Endothelial cell of umbilical vein (primary cell): ENCODE measurements at regions of chr9 and their contacts with region 1.

Region 1: GRCh38 chr9:87497604-87498045 is at the start of gene DAPK1:
- DNase-seq: peak; percentile 84
- H3K4me3 ChIP-seq: peak within 1 kb of the TSS; percentile 72 to 93 (median 77)
- H3K27ac ChIP-seq: peak within 1 kb of the TSS; percentile 78
- H3K4me1 ChIP-seq: peaks cover 35% of the 10 kb centered on the region
- H3K27me3 ChIP-seq: no peaks in the 10 kb centered on the region
- CTCF ChIP-seq: peak; percentile 9 to 42
- POLR2A ChIP-seq: peak; percentile 71
- total RNA-seq, gene DAPK1: 93.4 and 119 TPM in 2 replicates

Region 2: DNA sequence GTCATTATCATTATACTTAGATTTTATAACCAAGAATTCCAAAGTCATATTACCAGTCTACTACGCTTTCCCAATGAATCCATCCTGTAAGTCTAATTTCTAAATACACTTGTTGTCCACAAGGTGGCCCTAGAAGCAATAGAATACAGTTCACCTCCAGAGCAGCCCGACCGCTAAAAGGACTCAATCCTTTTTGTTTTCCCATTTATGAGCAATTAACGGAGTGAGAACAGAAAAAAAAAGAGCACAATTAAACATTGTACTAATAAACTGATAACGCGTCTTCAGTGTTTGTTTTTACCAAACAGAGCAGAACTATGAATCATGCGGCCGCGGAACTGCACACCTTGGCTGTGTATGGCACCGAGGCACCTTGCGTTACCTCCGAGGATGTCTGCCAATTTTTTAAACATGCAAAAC is 160.7 kb before region 1 on chr9:
- CTCF ChIA-PET with region 1: interaction called, 11 read pairs
- POLR2A ChIA-PET with region 1: no interaction called
- dilution Hi-C with region 1: no loop called
- intact Hi-C with region 1: loop called (anchors 1 kb)
- DNase-seq: peak; percentile 77
- H3K4me3 ChIP-seq: peak overlapping the region in 2 of 3 experiments; percentile 25 to 48
- H3K27ac ChIP-seq: no peak overlapping the region
- H3K4me1 ChIP-seq: peaks cover 6% of the 10 kb centered on the region
- H3K27me3 ChIP-seq: peaks cover 12 to 16% of the 10 kb centered on the region in 2 experiments
- CTCF ChIP-seq: peak; percentile 41 to 53
- POLR2A ChIP-seq: no peak

Region 3: GRCh38 chr9:87547667-87548066 is 50.0 kb after region 1 on chr9:
- CTCF ChIA-PET with region 1: interaction called, 11 read pairs
- POLR2A ChIA-PET with region 1: no interaction called
- dilution Hi-C with region 1: no loop called
- intact Hi-C with region 1: loop called (anchors 5 kb)
- DNase-seq: no peak
- H3K4me3 ChIP-seq: no peak overlapping the region
- H3K27ac ChIP-seq: no peak overlapping the region
- H3K4me1 ChIP-seq: peaks cover 24% of the 10 kb centered on the region
- H3K27me3 ChIP-seq: no peaks in the 10 kb centered on the region
- CTCF ChIP-seq: no peak
- POLR2A ChIP-seq: no peak

Region 4: DNA sequence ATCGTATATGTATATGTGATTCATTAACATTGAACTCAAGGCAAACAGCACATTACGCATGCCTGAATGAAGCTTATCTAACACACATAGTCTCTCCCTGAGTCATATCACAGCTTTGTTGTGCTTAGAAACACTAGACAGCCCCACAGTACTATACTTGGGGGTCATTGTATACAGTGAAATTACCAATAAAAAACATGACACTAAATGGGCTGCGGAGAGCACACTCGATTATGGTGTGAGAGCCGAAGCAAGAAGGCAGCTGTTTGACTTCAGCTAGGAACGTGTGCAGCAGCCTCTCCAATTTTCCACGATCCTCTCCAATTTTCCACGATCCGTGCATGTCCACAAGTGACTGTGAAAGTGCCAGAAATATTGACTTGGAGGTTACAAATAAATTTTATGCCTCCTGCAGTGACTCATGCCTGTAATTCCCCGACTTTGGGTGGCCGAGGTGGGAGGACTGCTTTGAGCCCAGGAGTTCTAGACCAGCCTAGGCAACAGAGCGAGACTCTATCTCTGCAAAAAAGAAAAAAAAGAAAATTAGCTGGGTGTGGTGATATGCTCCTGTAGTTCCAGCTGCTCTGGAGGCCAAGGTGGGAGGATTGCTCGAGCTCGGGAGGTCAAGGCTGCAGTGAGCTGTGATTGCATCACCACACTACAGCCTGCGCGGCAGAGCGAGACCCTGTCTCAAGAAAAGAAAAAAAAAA is 102.4 kb after region 1 on chr9:
- CTCF ChIA-PET with region 1: interaction called, 3 read pairs
- POLR2A ChIA-PET with region 1: no interaction called
- dilution Hi-C with region 1: no loop called
- intact Hi-C with region 1: loop called (anchors 1 kb)
- DNase-seq: peak; percentile 95
- H3K4me3 ChIP-seq: peak overlapping the region in 1 of 3 experiments; percentile 24
- H3K27ac ChIP-seq: peak overlapping the region; percentile 64
- H3K4me1 ChIP-seq: peaks cover 20% of the 10 kb centered on the region
- H3K27me3 ChIP-seq: no peaks in the 10 kb centered on the region
- CTCF ChIP-seq: no peak
- POLR2A ChIP-seq: no peak

Region 5: GRCh38 chr9:87640385-87640795 is 142.8 kb after region 1 on chr9:
- CTCF ChIA-PET with region 1: interaction called, 5 read pairs
- POLR2A ChIA-PET with region 1: interaction called, 3 read pairs
- dilution Hi-C with region 1: no loop called
- intact Hi-C with region 1: loop called (anchors 2 kb)
- DNase-seq: peak; percentile 97
- H3K4me3 ChIP-seq: no peak overlapping the region
- H3K27ac ChIP-seq: no peak overlapping the region
- H3K4me1 ChIP-seq: peaks cover 10% of the 10 kb centered on the region
- H3K27me3 ChIP-seq: no peaks in the 10 kb centered on the region
- CTCF ChIP-seq: no peak
- POLR2A ChIP-seq: no peak

Region 6: DNA sequence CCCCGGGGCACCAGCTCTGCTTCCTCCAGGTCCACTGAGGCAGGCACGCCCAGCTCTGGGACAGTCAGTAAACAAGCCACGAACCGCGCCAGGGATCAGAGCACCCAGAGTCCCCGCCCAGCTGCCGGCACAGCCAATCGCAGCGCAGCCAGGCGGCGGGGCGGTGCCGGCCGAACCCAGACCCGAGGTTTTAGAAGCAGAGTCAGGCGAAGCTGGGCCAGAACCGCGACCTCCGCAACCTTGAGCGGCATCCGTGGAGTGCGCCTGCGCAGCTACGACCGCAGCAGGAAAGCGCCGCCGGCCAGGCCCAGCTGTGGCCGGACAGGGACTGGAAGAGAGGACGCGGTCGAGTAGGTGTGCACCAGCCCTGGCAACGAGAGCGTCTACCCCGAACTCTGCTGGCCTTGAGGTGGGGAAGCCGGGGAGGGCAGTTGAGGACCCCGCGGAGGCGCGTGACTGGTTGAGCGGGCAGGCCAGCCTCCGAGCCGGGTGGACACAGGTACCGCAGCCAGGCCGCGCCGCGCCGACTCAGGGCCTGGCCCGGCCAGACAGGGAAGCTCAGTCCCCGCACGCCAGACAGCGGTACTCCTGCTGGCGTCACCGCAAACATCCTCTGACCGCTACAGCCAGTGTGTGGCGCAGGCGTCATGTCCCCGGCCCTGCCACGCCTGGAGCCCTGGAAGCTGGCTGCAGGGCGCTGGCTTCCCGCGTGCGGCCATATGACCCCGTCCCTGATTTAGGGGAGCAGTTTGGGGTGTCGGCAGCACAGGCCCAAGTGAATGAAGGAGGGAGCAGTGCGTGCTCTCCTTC is 228.5 kb after region 1 on chr9 and contains the start of gene CTSL:
- CTCF ChIA-PET with region 1: no interaction called
- POLR2A ChIA-PET with region 1: no interaction called
- dilution Hi-C with region 1: no loop called
- intact Hi-C with region 1: loop called (anchors 5 kb)
- DNase-seq: peak; percentile 80
- H3K4me3 ChIP-seq: peak within 1 kb of the TSS; percentile 24 to 79 (median 57)
- H3K27ac ChIP-seq: peak within 1 kb of the TSS; percentile 57
- H3K4me1 ChIP-seq: no peaks in the 10 kb centered on the region
- H3K27me3 ChIP-seq: no peaks in the 10 kb centered on the region
- CTCF ChIP-seq: peak in 1 of 2 donors; percentile 35
- POLR2A ChIP-seq: peak; percentile 92
- total RNA-seq, gene CTSL: 105 and 107 TPM in 2 replicates